Activated naive CD4-positive, alpha-beta T cell treated with anti-CD3 and anti-CD28 coated beads, Interleukin-2, amount 10 ng/mL, durations not matched to agents 7 days and 5 days (primary cell): ENCODE measurements at regions of chr1 and their contacts with region 1.

Region 1: GRCh38 chr1:207828485-207829158 is 76.8 kb downstream of the CD46 start:
- DNase-seq: peak; percentile 73
- H3K4me3 Mint-ChIP-seq: no peak overlapping the region
- H3K27ac Mint-ChIP-seq: peak overlapping the region; percentile 79
- H3K4me1 Mint-ChIP-seq: peaks cover 96% of the 10 kb centered on the region
- H3K27me3 Mint-ChIP-seq: peaks cover 6% of the 10 kb centered on the region

Region 2: GRCh38 chr1:207811920-207812720 is 16.5 kb before region 1 on chr1:
- CTCF ChIA-PET with region 1: interaction called, 11 read pairs
- DNase-seq: no peak
- H3K4me3 Mint-ChIP-seq: no peak overlapping the region
- H3K27ac Mint-ChIP-seq: no peak overlapping the region
- H3K4me1 Mint-ChIP-seq: peaks cover 46% of the 10 kb centered on the region
- H3K27me3 Mint-ChIP-seq: no peaks in the 10 kb centered on the region

Region 3: GRCh38 chr1:207863893-207864535 is 35.4 kb after region 1 on chr1:
- CTCF ChIA-PET with region 1: interaction called, 237 read pairs
- DNase-seq: peak; percentile 73
- H3K4me3 Mint-ChIP-seq: peak overlapping the region; percentile 41
- H3K27ac Mint-ChIP-seq: peak overlapping the region; percentile 84
- H3K4me1 Mint-ChIP-seq: peaks cover 67% of the 10 kb centered on the region
- H3K27me3 Mint-ChIP-seq: no peaks in the 10 kb centered on the region

Region 4: DNA sequence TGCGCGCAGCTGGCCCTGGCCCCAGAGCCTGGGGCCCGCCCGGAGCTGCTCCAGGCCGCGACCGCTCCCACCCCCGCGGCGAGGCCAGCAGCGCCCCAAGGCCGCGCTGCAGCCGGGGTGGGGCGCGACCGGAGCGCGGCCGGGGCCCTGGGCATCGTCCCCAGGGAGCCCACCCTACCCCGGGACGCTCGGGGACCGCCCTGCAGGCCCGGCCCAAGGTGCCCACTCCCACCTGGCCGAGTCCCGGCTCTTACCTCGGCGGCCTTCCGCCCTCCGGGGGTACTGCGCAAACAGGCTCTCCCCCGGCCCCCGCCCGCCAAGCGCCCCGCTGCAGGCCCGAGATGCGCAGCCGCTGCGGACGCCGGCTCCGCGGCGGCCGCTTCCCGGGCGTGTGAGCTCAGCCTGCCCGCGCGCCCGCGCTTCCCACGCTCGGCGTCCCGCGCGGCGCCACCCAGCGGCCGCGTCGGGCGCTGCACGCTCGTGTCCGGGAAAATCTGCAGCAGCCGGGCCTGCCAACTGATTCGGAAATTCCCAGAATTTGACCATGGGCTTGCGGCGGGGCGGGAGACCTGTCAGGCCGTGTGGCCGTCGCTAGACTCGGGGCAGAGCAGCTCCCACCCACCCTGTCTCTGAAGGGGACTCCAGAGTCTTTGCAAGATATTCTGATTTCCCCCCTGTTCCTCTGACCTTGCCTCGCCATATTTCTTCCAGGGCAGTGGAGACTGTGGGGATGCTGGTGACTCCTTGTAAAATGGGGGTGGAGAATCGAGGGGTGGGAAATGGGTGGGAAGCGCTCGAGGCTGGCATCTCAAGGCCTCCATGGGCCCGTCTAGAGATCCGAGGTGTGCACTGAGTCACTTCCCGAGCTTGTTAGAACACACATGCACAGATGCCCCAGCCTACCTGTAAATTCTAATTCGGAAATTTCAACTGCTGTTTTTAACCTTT is 40.4 kb after region 1 on chr1:
- CTCF ChIA-PET with region 1: interaction called, 237 read pairs
- DNase-seq: peak; percentile 68
- H3K4me3 Mint-ChIP-seq: peak overlapping the region; percentile 95
- H3K27ac Mint-ChIP-seq: peak overlapping the region; percentile 97
- H3K4me1 Mint-ChIP-seq: peaks cover 83% of the 10 kb centered on the region
- H3K27me3 Mint-ChIP-seq: no peaks in the 10 kb centered on the region

Region 5: GRCh38 chr1:208093754-208094719 is 265.4 kb after region 1 on chr1:
- CTCF ChIA-PET with region 1: no interaction called
- DNase-seq: peak; percentile 78
- H3K4me3 Mint-ChIP-seq: no peak overlapping the region
- H3K27ac Mint-ChIP-seq: no peak overlapping the region
- H3K4me1 Mint-ChIP-seq: no peaks in the 10 kb centered on the region
- H3K27me3 Mint-ChIP-seq: no peaks in the 10 kb centered on the region